T-cell (primary cell): ENCODE measurements at regions of chr19 and their contacts with region 1.

Region 1: DNA sequence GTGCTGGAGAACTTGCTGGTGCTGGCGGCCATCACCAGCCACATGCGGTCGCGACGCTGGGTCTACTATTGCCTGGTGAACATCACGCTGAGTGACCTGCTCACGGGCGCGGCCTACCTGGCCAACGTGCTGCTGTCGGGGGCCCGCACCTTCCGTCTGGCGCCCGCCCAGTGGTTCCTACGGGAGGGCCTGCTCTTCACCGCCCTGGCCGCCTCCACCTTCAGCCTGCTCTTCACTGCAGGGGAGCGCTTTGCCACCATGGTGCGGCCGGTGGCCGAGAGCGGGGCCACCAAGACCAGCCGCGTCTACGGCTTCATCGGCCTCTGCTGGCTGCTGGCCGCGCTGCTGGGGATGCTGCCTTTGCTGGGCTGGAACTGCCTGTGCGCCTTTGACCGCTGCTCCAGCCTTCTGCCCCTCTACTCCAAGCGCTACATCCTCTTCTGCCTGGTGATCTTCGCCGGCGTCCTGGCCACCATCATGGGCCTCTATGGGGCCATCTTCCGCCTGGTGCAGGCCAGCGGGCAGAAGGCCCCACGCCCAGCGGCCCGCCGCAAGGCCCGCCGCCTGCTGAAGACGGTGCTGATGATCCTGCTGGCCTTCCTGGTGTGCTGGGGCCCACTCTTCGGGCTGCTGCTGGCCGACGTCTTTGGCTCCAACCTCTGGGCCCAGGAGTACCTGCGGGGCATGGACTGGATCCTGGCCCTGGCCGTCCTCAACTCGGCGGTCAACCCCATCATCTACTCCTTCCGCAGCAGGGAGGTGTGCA is 587 bp downstream of the S1PR4 start:
- DNase-seq: peak in 5 of 35 experiments; percentile 13 to 50 (median 30)
- ATAC-seq: peak; percentile 10 to 14 (median 12)
- H3K4me3 ChIP-seq: peak overlapping the region; percentile 99
- H3K4me3 Mint-ChIP-seq: peak overlapping the region; percentile 95 to 98 (median 95)
- H3K27ac ChIP-seq: peak overlapping the region; percentile 85
- H3K27ac Mint-ChIP-seq: peak overlapping the region; percentile 94 to 98
- H3K4me1 ChIP-seq: peaks cover 24 to 63% of the 10 kb centered on the region in 2 experiments
- H3K4me1 Mint-ChIP-seq: peaks cover 34 to 41% (median 35%) of the 10 kb centered on the region in 3 donors
- H3K27me3 ChIP-seq: no peaks in the 10 kb centered on the region
- H3K27me3 Mint-ChIP-seq: no peaks in the 10 kb centered on the region

Region 2: DNA sequence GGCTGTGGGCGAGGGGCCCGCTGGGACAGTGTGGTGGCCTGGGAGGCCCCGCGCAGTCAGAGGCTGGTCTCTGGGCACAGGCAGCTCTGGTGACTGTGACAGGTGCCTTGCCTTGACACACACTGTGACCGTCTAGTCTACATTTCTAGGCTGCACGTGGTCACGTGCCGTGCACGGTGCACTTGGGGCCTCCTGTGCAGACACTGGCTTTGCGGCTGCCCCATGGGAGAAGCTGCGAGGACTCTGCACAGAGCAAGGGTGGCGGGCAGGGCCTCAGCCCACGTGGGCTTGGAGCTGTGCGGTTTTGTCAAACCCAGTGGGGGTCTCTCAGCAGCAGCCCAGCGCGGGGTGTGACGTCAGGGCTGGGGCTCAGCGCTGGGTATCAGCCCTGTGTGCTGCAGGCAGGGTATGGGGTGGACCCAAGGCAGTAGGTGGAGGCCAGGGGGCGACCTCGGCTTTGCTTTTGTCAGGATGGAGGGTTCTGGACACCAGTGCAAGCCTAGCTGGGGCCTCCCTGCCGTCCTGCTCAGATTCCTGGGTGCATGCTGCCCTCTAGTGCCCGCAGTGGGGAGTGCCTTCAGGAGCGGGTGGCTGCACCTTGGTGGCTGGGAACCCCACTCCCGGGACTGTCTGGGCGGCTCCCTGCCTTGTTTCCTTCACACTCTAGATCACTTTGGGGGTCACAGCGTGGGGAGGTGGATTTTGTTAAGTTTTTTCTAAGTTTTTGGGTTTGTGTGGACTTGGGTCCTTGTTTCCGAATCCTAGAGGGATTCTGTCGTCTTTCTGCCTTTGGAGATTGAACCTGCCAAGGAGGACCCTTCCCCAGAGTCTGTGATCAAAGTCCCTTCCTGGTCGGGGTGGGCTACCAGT is 1852.3 kb after region 1 on chr19:
- CTCF ChIA-PET with region 1: interaction called in 1 of 2 experiments, 13 read pairs
- POLR2A ChIA-PET with region 1: no interaction called
- DNase-seq: peak; percentile 41 to 86 (median 73)
- ATAC-seq: peak; percentile 88 to 91 (median 89)
- H3K4me3 ChIP-seq: no peak overlapping the region
- H3K4me3 Mint-ChIP-seq: no peak overlapping the region
- H3K27ac ChIP-seq: no peak overlapping the region
- H3K27ac Mint-ChIP-seq: no peak overlapping the region
- H3K4me1 ChIP-seq: peaks cover 0 to 11% of the 10 kb centered on the region in 2 experiments
- H3K4me1 Mint-ChIP-seq: peaks cover 9 to 20% (median 10%) of the 10 kb centered on the region in 3 donors
- H3K27me3 ChIP-seq: no peaks in the 10 kb centered on the region
- H3K27me3 Mint-ChIP-seq: no peaks in the 10 kb centered on the region